Activated CD4-positive, alpha-beta T cell treated with anti-CD3 and anti-CD28 coated beads, Interleukin-2, amount 10 ng/mL, durations not matched to agents 24 days and 14 days (primary cell): ENCODE measurements at regions of chr3 and their contacts with region 1.

Region 1: GRCh38 chr3:100334488-100335351 is at the start of gene NIT2:
- DNase-seq: peak; percentile 93
- H3K4me3 Mint-ChIP-seq: peak within 1 kb of the TSS; percentile 95
- H3K27ac Mint-ChIP-seq: peak within 1 kb of the TSS; percentile 98
- H3K4me1 Mint-ChIP-seq: peaks cover 18% of the 10 kb centered on the region
- H3K27me3 Mint-ChIP-seq: no peaks in the 10 kb centered on the region
- total RNA-seq, gene NIT2: 75.5 and 79.2 TPM in 2 replicates

Region 2: DNA sequence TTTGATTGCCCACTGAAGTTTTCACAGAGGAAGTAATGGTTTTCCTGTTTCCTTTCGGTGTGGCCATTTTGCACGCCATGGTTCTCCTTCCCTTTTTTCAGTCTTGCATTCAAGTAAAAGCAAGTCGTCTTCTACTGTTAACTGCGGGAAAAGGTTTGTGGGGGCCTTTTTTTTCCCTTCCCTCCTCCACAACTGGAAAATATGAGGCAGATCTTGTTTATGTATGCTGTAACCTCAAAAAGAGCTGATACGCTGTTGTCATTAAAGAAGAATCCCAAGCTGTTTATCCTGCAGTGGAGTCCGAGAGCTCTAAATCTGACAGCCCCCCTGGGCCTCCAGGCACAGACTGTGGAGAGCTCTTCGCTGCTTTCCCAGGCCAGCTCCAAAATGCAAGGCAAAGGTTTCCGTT is 260.8 kb before region 1 on chr3:
- intact Hi-C with region 1: loop called (anchors 10 kb)
- DNase-seq: peak; percentile 79
- H3K4me3 Mint-ChIP-seq: peak overlapping the region; percentile 79
- H3K27ac Mint-ChIP-seq: peak overlapping the region; percentile 92
- H3K4me1 Mint-ChIP-seq: peaks cover 60% of the 10 kb centered on the region
- H3K27me3 Mint-ChIP-seq: no peaks in the 10 kb centered on the region

Region 3: DNA sequence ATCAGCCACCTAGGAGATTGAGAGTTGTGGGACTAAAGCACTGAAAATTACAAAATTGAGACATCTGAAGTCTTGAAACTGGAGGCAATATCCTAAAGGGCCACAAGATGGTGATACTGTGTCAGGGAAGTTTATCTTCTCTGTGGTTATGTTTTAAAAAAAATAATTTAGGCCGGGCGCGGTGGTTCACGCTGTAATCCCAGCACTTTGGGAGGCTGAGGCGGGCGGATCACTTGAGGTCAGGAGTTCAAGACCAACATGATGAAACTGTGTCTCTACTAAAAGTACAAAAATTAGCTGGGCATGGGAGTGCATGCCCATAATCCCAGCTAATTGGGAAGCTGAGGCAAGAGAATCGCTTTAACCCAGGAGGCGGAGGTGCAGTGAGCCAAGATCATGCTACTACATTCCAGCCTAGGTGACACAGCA is 18.1 kb before region 1 on chr3:
- intact Hi-C with region 1: loop called (anchors 1 kb)
- DNase-seq: peak; percentile 86
- H3K4me3 Mint-ChIP-seq: peak overlapping the region; percentile 40
- H3K27ac Mint-ChIP-seq: peak overlapping the region; percentile 55
- H3K4me1 Mint-ChIP-seq: peaks cover 11% of the 10 kb centered on the region
- H3K27me3 Mint-ChIP-seq: no peaks in the 10 kb centered on the region